CD8-positive, alpha-beta memory T cell (primary cell): ENCODE measurements at regions of chr6 and their contacts with region 1.

Region 1: DNA sequence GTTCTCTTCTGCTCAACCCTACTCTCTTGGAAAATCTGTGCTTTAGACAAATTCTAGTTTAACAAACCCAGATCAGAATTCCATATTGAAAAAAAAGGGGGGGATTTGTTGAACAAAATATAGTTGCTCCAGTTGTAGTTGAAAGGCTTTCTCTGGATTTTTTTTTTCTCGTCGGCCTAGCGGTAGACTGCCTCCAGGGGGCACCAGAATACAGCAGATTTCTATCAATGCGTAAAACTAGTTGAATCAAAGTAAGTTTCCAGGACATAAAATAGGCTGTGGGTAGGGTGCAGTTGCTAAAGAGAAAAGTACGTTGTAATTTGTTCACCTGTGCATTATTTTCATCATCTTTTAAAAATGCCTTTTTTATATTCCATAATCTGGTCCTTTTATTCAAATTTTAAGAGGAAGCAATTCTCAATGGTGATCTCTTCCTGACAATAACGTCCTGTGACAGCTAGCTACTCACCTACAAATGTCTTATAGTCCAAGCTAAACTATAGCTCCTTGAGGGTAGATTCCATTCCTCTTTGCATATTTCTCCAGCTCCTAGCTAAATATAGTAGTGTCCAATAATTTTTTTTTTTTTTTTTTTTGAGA is 105.4 kb downstream of the PERP start:
- DNase-seq: peak; percentile 37 to 72 (median 42)
- H3K4me3 ChIP-seq: no peak overlapping the region
- H3K4me3 Mint-ChIP-seq: no peak overlapping the region
- H3K27ac ChIP-seq: no peak overlapping the region
- H3K27ac Mint-ChIP-seq: peak overlapping the region in 2 of 8 donors; percentile 7 to 15
- H3K4me1 ChIP-seq: no peaks in the 10 kb centered on the region
- H3K4me1 Mint-ChIP-seq: peaks cover 3 to 6% (median 5%) of the 10 kb centered on the region in 3 donors
- H3K27me3 ChIP-seq: no peaks in the 10 kb centered on the region
- H3K27me3 Mint-ChIP-seq: peaks cover 0 to 2% of the 10 kb centered on the region in 2 donors

Region 2: GRCh38 chr6:137707590-137708360 is 294.1 kb before region 1 on chr6:
- CTCF ChIA-PET with region 1: interaction called, 25 read pairs
- POLR2A ChIA-PET with region 1: no interaction called
- DNase-seq: peak; percentile 74 to 96 (median 92)
- H3K4me3 ChIP-seq: peak overlapping the region; percentile 20
- H3K4me3 Mint-ChIP-seq: peak overlapping the region; percentile 38 to 78 (median 75)
- H3K27ac ChIP-seq: peak overlapping the region; percentile 72
- H3K27ac Mint-ChIP-seq: peak overlapping the region; percentile 90 to 99 (median 97)
- H3K4me1 ChIP-seq: peaks cover 47% of the 10 kb centered on the region
- H3K4me1 Mint-ChIP-seq: peaks cover 50 to 75% (median 72%) of the 10 kb centered on the region in 3 donors
- H3K27me3 ChIP-seq: no peaks in the 10 kb centered on the region
- H3K27me3 Mint-ChIP-seq: peaks cover 0 to 7% of the 10 kb centered on the region in 2 donors

Region 3: DNA sequence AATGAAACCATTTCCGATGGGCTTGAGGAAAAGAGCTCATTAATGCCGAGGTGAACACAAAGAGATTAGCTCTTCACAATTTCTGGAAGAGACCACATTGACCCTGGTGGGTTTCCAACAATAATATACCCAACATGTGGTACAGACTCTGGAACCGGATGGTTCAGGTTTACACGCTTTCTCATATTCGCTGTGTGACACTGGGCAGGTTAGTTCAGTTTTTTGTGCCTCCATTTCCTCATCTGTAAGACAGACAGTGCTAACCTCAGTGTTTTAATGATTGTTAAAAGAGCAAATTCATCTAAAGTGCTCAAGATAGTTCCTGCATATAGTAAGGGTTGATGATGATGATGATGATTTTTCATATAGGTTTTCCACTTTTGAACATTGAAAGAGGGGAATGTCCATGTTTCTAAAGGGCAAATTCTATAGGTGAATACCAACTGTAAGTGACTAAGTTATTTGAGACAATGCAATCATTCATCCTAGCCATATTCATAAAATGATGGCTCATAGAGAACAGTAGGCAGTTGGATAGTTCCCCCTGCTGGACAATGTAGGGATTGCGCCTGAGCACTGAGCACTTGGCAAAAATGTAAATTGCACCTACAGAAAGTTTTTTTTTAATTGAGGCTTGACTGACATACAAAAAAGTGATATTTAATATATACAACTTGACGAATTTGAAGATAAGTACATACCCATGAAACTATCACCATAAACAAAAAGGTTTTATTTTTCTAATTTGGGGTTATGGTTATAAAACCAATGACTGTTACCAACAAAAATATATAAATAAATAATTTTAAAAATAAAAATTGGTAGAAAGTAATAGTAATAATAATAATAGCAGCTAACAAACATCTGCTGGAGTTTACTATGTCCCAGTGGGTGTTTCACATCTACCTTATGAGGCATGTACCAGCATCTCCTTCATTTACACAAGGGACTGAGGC is 107.5 kb after region 1 on chr6:
- CTCF ChIA-PET with region 1: interaction called, 60 read pairs
- POLR2A ChIA-PET with region 1: no interaction called
- DNase-seq: peak; percentile 59 to 78 (median 68)
- H3K4me3 ChIP-seq: no peak overlapping the region
- H3K4me3 Mint-ChIP-seq: peak overlapping the region in 3 of 7 donors; percentile 24 to 74 (median 33)
- H3K27ac ChIP-seq: no peak overlapping the region
- H3K27ac Mint-ChIP-seq: peak overlapping the region in 5 of 8 donors; percentile 1 to 70 (median 18)
- H3K4me1 ChIP-seq: peaks cover 13% of the 10 kb centered on the region
- H3K4me1 Mint-ChIP-seq: peaks cover 22 to 40% (median 22%) of the 10 kb centered on the region in 3 donors
- H3K27me3 ChIP-seq: peaks cover 10% of the 10 kb centered on the region
- H3K27me3 Mint-ChIP-seq: peaks cover 5 to 9% of the 10 kb centered on the region in 2 donors